Activated B cell treated with CpG ODN at 0.5 μM for 24 hours (primary cell): ENCODE measurements at regions of chr12 and their contacts with region 1.

Region 1: DNA sequence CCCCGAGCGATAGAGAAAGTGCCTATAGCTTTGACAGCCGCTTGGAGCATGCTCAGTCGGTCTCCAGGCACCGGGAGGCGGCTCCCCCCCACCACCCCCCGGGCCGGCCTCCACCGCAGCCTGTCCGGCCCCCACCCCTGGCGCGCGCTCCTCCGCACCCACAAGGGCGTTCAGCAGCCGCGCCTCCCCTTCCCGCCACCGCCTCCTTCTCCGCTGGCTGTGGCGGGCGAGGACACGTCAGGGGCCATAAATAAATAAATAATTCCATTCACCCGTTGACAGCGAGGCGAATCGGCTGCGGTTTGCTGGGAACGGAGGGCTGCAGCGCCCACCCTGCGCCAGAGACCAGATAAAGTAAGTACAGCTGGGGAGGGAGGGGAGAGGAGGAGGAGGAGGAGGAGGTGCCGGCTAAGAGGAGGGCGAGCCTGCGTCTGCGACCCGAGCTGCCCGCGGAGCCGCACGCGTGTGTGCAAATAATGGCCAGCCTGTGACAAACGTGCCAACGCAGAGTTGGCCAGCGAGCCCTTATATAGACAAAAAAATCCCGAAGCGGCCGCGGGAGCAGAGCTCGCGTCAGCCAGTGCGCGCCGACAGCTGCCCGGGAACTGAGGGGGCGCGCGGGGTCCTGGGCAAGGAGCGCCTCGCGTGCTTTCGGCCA is at the start of gene SLC16A7:
- DNase-seq: peak; percentile 73
- ATAC-seq: peak; percentile 67
- H3K4me3 Mint-ChIP-seq: peak within 1 kb of the TSS; percentile 92
- H3K27ac Mint-ChIP-seq: peak within 1 kb of the TSS; percentile 99
- H3K4me1 Mint-ChIP-seq: peaks cover 38% of the 10 kb centered on the region
- H3K27me3 Mint-ChIP-seq: no peaks in the 10 kb centered on the region
- CTCF ChIP-seq: no peak
- total RNA-seq, gene SLC16A7: 20.4 and 22.4 TPM in 2 replicates

Region 2: GRCh38 chr12:57941165-57941894 is 1654.7 kb before region 1 on chr12 and contains the start of gene ATP23:
- CTCF ChIA-PET with region 1: no interaction called
- POLR2A ChIA-PET with region 1: no interaction called
- intact Hi-C with region 1: loop called (anchors 2 kb)
- DNase-seq: peak; percentile 86
- ATAC-seq: peak; percentile 89
- H3K4me3 Mint-ChIP-seq: peak within 1 kb of the TSS; percentile 96
- H3K27ac Mint-ChIP-seq: peak within 1 kb of the TSS; percentile 95
- H3K4me1 Mint-ChIP-seq: peaks cover 22% of the 10 kb centered on the region
- H3K27me3 Mint-ChIP-seq: no peaks in the 10 kb centered on the region
- CTCF ChIP-seq: no peak
- total RNA-seq, gene ATP23: 3.0 and 3.9 TPM in 2 replicates

Region 3: DNA sequence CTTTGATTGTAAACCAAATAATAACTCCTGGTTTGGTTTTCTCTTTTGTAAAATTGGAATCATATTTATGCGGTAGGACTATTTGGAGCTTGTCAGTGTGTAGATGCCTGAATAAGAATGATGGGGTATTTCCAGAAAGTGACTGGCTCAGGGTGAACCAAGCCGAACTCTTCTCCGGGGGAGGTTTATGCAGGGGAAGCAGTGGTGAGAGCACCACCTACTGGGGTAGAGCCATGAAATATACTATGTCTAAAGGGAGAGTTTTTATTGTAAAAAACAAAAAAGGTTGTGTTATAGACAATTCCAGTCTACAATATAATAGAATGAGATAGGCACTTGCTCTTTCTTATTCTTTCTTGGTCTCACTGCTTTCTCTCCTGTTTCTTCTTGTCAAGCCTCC is 223.1 kb before region 1 on chr12:
- CTCF ChIA-PET with region 1: no interaction called
- POLR2A ChIA-PET with region 1: no interaction called
- intact Hi-C with region 1: no loop called
- DNase-seq: no peak
- ATAC-seq: no peak
- H3K4me3 Mint-ChIP-seq: no peak overlapping the region
- H3K27ac Mint-ChIP-seq: no peak overlapping the region
- H3K4me1 Mint-ChIP-seq: no peaks in the 10 kb centered on the region
- H3K27me3 Mint-ChIP-seq: no peaks in the 10 kb centered on the region
- CTCF ChIP-seq: no peak

Region 4: DNA sequence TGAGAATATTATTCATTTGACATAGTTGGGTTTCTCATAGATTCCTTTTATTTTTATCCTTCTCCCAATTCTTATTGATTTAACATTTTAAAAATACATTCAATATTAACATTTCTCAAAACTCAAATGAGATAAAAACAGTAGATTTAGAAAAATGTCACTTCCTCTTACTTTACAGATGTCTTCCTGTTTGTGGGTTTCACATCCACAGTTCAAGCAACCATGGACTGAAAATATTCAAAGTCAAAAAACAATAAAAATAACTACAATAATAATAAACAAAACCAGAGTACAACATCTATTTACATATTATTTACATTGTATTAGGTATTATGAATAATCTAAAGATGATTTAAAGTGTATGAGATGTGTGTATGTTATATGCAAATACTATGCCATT is 111.4 kb before region 1 on chr12:
- CTCF ChIA-PET with region 1: no interaction called
- POLR2A ChIA-PET with region 1: no interaction called
- intact Hi-C with region 1: loop called (anchors 5 kb)
- DNase-seq: no peak
- ATAC-seq: no peak
- H3K4me3 Mint-ChIP-seq: no peak overlapping the region
- H3K27ac Mint-ChIP-seq: no peak overlapping the region
- H3K4me1 Mint-ChIP-seq: peaks cover 27% of the 10 kb centered on the region
- H3K27me3 Mint-ChIP-seq: peaks cover 1% of the 10 kb centered on the region
- CTCF ChIP-seq: no peak

Region 5: DNA sequence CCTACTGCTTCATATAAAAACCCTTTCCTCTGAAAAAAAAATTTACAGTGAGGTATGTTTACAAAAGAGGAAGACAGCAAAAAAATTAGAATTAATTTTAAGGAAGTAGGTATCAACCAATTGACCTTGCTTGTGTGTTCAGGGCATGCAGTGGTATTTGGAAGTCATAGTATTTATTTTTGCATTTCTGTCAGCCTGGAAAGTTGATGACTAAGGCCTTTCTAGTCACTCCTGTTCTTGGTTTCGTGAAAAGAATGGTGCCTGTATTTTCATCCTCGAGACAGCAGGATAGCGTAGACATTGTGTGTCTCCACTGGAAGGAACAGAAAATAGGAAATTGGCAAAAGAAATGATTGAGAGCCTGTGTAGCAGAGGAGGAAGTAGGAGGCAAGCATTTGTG is 24.3 kb after region 1 on chr12:
- CTCF ChIA-PET with region 1: no interaction called
- POLR2A ChIA-PET with region 1: no interaction called
- intact Hi-C with region 1: loop called (anchors 2 kb)
- DNase-seq: no peak
- ATAC-seq: peak; percentile 82
- H3K4me3 Mint-ChIP-seq: peak overlapping the region; percentile 39
- H3K27ac Mint-ChIP-seq: peak overlapping the region; percentile 62
- H3K4me1 Mint-ChIP-seq: peaks cover 38% of the 10 kb centered on the region
- H3K27me3 Mint-ChIP-seq: no peaks in the 10 kb centered on the region
- CTCF ChIP-seq: no peak

Region 6: DNA sequence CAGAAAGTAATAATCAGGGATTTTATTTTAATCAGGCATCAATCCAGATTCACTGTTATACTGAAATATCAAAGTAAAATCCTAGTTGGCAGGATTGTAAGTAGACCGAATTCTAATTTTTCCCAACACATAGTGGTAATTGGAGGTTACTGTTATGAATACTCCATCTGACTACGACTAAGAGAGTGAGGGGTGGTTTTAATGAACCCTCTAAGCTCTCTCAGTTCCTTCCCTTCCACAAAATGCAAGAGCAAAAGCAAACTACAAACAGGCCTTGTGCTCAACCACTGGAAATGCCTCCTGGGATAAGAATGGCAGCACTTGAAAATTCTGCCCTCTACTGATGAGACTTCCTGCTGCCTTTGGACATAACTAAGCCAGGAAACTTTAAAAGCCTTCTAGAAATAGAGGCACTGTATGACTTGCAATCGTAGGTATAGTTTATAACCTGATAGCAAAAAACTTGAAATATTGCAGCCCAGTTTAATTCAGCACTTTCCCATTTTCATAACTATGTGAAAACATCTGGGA is 184.7 kb after region 1 on chr12:
- CTCF ChIA-PET with region 1: no interaction called
- POLR2A ChIA-PET with region 1: no interaction called
- intact Hi-C with region 1: loop called (anchors 5 kb)
- DNase-seq: no peak
- ATAC-seq: no peak
- H3K4me3 Mint-ChIP-seq: no peak overlapping the region
- H3K27ac Mint-ChIP-seq: no peak overlapping the region
- H3K4me1 Mint-ChIP-seq: no peaks in the 10 kb centered on the region
- H3K27me3 Mint-ChIP-seq: no peaks in the 10 kb centered on the region
- CTCF ChIP-seq: no peak